Activated T-helper 2 cell treated with anti-CD3 and anti-CD28 coated beads, Interferon-gamma antibody, Interleukin-2, Interleukin-4, amounts not matched to agents 10 μg/mL and 5 μg/mL and 100 μg/mL, durations not matched to agents 14 hours and 24 hours and 36 hours (primary cell): ENCODE measurements at regions of chr7 and their contacts with region 1.

Region 1: GRCh38 chr7:1044191-1045068 is at the start of gene GPR146:
- DNase-seq: peak; percentile 86
- H3K4me3 Mint-ChIP-seq: peak within 1 kb of the TSS; percentile 88
- H3K27ac Mint-ChIP-seq: peak within 1 kb of the TSS; percentile 65
- H3K4me1 Mint-ChIP-seq: peaks cover 58% of the 10 kb centered on the region
- H3K27me3 Mint-ChIP-seq: no peaks in the 10 kb centered on the region
- total RNA-seq, gene GPR146: 5.6 and 6.7 TPM in 2 replicates

Region 2: DNA sequence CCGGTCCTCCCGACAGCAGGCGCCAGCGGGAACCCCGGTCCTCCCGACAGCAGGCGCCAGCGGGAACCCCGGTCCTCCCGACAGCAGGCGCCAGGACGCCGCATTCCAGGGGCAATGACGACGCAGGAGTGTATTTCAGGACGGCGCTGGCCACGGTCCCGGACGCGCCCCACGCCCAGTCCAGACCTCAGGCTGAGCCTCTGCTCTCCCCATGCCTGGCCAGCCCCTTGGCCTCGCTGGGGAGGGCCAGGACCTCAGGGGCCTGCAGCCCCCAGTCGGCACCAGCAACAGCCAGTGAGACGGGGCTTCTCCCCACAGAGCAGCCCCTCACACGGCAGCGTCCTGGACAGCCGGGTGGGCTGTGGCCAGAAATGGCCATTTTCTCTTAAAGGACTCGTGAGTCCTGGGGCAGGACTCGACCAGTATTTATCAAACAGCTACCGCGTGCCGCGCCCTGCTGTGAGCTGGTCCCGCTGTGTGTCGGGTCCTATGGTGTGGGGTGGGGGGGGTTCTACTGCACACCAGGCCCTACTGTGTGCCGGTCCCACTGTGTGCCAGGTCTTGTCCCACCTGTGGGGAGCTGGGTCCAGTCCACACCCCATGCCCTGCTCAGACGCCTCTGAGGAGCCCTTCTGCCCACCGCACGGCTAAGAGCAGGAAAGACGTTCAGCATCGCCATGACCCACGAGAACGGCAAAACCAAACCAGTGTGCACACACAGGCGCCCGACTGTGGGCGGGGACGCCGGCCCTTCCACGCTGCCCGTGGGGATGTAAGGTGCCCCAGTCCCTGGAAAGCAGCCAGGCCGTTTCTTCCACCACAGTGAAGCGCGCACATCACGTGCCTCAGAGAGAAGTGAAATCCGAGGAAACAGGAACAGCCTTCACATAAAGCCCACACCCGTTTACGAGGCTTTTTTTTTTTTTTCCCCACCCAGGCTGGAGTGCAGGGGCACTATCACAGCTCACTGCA is 134.8 kb before region 1 on chr7:
- intact Hi-C with region 1: loop called (anchors 10 kb)
- DNase-seq: no peak
- H3K4me3 Mint-ChIP-seq: no peak overlapping the region
- H3K27ac Mint-ChIP-seq: no peak overlapping the region
- H3K4me1 Mint-ChIP-seq: peaks cover 5% of the 10 kb centered on the region
- H3K27me3 Mint-ChIP-seq: no peaks in the 10 kb centered on the region

Region 3: GRCh38 chr7:974820-975681 is 69.4 kb before region 1 on chr7 and contains the start of gene COX19:
- intact Hi-C with region 1: loop called (anchors 5 kb)
- DNase-seq: peak; percentile 85
- H3K4me3 Mint-ChIP-seq: peak within 1 kb of the TSS; percentile 92
- H3K27ac Mint-ChIP-seq: peak within 1 kb of the TSS; percentile 93
- H3K4me1 Mint-ChIP-seq: peaks cover 12% of the 10 kb centered on the region
- H3K27me3 Mint-ChIP-seq: no peaks in the 10 kb centered on the region
- total RNA-seq, gene COX19: 15.0 and 17.2 TPM in 2 replicates

Region 4: DNA sequence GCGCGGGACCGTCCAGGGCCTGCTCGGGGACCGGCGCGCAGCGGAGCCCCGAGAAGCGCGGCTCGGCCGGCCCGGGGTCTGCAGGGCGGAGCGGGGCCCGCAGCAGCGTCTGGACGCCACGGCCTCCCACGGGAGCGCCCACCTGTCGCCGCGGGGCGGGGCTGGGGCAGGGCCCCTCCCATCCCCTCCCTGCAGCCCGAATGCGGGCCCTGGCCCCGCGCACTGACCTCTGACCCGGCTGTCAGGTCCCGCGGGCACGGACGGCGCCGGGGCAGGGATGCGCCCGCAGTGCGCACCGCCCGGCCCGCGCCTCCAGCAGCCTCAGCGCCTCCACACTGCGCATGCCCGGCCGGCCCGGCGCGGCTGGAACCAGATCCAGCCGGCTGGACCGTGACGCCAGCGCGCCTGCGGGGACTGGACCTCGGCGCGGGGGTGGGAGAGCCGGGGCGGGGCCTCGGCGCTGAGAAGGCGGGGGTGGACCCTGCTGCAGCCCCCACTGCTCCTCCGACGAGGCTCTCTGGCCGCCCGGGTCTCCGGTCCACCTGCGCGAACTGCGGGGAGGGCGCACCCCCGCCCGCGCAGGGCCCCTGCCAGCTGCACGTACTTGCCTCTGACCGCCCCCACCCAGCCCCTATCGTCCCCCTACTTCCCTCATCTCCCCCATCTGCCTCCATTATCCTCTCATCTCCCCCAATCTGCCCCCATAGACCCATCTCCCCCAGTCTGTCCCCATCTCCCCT is 16.2 kb before region 1 on chr7:
- intact Hi-C with region 1: loop called (anchors 2 kb)
- DNase-seq: peak; percentile 80
- H3K4me3 Mint-ChIP-seq: peak overlapping the region; percentile 79
- H3K27ac Mint-ChIP-seq: peak overlapping the region; percentile 89
- H3K4me1 Mint-ChIP-seq: peaks cover 25% of the 10 kb centered on the region
- H3K27me3 Mint-ChIP-seq: no peaks in the 10 kb centered on the region

Region 5: GRCh38 chr7:1065263-1066260 is 21.1 kb after region 1 on chr7:
- intact Hi-C with region 1: loop called (anchors 2 kb)
- DNase-seq: peak; percentile 77
- H3K4me3 Mint-ChIP-seq: no peak overlapping the region
- H3K27ac Mint-ChIP-seq: no peak overlapping the region
- H3K4me1 Mint-ChIP-seq: peaks cover 1% of the 10 kb centered on the region
- H3K27me3 Mint-ChIP-seq: peaks cover 3% of the 10 kb centered on the region